Body of pancreas (tissue), 4 donors: ENCODE measurements at regions of chr2 and their contacts with region 1.

Region 1: GRCh38 chr2:120343433-120344105 is 2.4 kb upstream of the INHBB start:
- DNase-seq: peak; percentile 84 to 89 (median 86)
- ATAC-seq: peak; percentile 79
- H3K4me3 ChIP-seq: no peak overlapping the region
- H3K27ac ChIP-seq: no peak overlapping the region
- H3K4me1 ChIP-seq: peaks cover 39% of the 10 kb centered on the region
- H3K27me3 ChIP-seq: peaks cover 0 to 32% of the 10 kb centered on the region in 2 donors
- CTCF ChIP-seq: peak; percentile 69 to 95 (median 90)
- POLR2A ChIP-seq: no peak

Region 2: DNA sequence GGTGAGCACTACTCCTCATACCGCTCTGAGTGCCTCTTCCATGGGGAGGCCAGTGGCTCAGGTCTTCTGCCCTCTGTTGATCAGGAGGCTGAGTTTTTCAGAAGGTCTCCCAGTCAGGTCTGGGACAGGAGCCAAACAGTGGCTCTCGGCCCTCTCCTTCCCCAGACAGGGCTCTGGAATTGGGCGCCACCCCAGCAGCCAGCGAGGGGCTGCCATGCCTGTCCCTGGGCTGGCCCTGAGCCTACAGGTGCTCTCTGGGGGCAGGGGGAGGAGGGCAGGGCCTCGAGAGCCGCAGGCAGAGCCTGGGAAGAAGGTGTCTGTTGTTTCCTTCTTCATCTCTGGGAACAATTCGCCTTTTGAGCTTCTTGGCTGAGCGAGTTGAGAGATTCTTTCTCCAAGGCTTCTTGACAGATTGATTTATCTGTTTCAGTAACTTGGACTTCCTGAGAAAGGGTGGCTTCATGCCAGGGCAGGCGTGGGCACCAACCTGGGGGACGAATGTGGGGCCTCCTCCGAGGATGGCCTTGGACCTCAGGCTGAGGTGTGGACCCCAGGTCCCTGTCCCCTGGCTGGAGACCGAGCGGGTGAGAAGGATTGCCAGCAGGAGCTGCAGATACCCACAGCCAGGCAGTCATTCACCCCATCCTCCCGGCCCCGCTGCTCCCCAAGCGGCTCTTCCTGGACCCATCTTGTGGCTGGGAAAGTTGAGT is 327.4 kb after region 1 on chr2:
- intact Hi-C with region 1: loop called (anchors 5 kb)
- DNase-seq: peak in 1 of 4 donors; percentile 50
- ATAC-seq: peak; percentile 12
- H3K4me3 ChIP-seq: no peak overlapping the region
- H3K27ac ChIP-seq: peak overlapping the region in 3 of 4 donors; percentile 2 to 35 (median 16)
- H3K4me1 ChIP-seq: peaks cover 15% of the 10 kb centered on the region
- H3K27me3 ChIP-seq: no peaks in the 10 kb centered on the region
- CTCF ChIP-seq: no peak
- POLR2A ChIP-seq: no peak

Region 3: GRCh38 chr2:121264351-121264715 is 920.8 kb after region 1 on chr2:
- intact Hi-C with region 1: no loop called
- DNase-seq: no peak
- ATAC-seq: no peak
- H3K4me3 ChIP-seq: no peak overlapping the region
- H3K27ac ChIP-seq: no peak overlapping the region
- H3K4me1 ChIP-seq: peaks cover 8% of the 10 kb centered on the region
- H3K27me3 ChIP-seq: no peaks in the 10 kb centered on the region
- CTCF ChIP-seq: no peak
- POLR2A ChIP-seq: no peak